IMR-90 (cell line): ENCODE measurements at regions of chrX and their contacts with region 1.

Region 1: GRCh38 chrX:69285881-69286564 is 120.8 kb upstream of the PJA1 start:
- DNase-seq: no peak
- ATAC-seq: peak; percentile 80
- H3K4me3 ChIP-seq: peak overlapping the region; percentile 23; the same call in 1 of the 2 replicates
- H3K27ac ChIP-seq: no peak overlapping the region
- H3K4me1 ChIP-seq: peaks cover 3% of the 10 kb centered on the region; the same call in 1 of the 2 replicates
- H3K27me3 ChIP-seq: peaks cover 41% of the 10 kb centered on the region
- CTCF ChIP-seq: peak; percentile 73
- POLR2A ChIP-seq: no peak
- RAD21 ChIP-seq: peak; percentile 79

Region 2: DNA sequence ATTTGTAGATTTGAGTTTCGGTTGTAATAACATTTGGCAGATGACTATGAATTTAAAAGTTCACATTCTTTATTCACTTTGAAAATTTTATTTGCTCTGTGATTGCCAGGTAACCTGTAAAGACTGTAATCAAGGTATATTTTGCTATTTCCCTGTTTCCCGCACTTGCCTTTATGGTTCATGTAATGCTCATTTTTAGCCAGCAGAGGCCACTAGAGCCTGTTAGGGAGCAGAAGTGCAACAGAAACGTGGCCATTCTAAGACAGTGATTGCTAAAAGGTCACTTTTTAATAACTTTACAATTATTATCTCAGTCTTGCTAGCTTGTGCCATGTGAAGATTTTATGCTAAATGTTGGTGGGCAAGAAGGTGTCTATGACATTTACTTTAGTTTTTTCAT is 774.8 kb before region 1 on chrX:
- CTCF ChIA-PET with region 1: no interaction called
- POLR2A ChIA-PET with region 1: no interaction called
- dilution Hi-C with region 1: no loop called
- in situ Hi-C with region 1: no loop called
- intact Hi-C with region 1: loop called (anchors 10 kb)
- DNase-seq: peak; percentile 48
- ATAC-seq: peak; percentile 86
- H3K4me3 ChIP-seq: no peak overlapping the region
- H3K27ac ChIP-seq: no peak overlapping the region
- H3K4me1 ChIP-seq: no peaks in the 10 kb centered on the region
- H3K27me3 ChIP-seq: no peaks in the 10 kb centered on the region
- CTCF ChIP-seq: peak; percentile 77
- POLR2A ChIP-seq: no peak
- RAD21 ChIP-seq: peak; percentile 74

Region 3: DNA sequence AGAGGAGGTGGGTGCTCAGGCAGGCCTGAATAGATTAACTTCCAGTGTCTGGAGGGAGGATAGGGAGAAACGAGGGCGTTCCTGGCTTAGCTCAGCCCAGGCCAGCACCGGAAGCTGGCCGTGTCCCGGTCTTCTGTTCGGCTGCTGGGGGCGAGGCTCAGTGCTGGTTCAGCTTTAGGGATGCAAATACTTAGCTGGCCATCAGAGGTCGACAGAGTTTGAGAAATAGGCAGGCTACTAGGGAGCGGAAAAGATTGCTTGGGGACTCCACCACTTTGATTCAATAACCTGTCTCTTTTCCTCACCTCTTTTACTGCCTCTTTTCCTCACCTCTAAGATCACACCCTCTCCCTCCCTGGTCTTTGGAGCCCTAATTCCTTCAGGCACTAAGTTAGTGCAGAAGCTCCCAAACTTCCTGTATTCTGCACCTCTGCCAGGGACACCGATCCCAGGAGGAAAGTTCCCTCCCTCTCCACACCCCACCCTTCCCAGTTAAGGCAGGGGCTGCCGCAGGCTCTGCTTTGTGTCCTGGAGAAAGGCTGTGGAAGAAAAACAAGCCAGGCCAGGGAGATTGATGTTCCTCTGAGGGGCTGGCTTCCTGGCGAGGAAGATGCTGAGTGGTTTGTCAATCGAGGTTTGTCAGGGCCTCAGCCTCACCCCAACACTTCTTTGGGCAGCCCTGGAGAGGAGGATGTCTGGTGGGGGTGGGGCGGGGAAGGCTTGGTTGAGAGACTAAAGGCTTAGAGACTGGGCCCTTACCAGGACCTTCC is 463.2 kb before region 1 on chrX:
- CTCF ChIA-PET with region 1: interaction called, 3 read pairs
- POLR2A ChIA-PET with region 1: no interaction called
- dilution Hi-C with region 1: no loop called
- in situ Hi-C with region 1: loop called (anchors 5 kb)
- intact Hi-C with region 1: loop called (anchors 1 kb)
- DNase-seq: peak; percentile 47
- ATAC-seq: peak; percentile 92
- H3K4me3 ChIP-seq: no peak overlapping the region
- H3K27ac ChIP-seq: no peak overlapping the region
- H3K4me1 ChIP-seq: no peaks in the 10 kb centered on the region
- H3K27me3 ChIP-seq: peaks cover 35% of the 10 kb centered on the region
- CTCF ChIP-seq: peak; percentile 74
- POLR2A ChIP-seq: no peak
- RAD21 ChIP-seq: peak; percentile 81

Region 4: DNA sequence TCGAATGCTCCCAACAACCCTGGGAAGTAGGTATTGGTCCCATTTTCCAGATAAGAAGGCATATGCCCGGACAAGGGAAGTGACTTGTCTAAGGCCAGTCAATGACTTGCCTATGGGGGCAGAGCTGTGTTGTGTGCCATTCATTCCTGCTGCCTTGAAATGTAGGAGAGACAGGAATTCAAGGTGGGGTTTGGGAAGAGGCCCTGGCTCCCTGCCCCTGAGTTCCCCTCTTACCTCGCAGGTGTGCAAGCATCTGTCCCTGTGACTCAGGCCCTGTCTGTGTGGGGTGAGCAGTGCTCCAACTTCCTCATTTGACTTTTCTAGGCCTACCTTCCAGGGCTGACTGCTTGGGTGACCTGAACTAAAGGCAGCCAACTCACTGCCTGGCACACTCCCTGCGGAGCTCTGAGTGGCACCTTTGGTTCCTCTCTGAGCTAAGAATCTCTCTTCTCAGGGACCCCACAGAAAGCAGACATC is 452.1 kb before region 1 on chrX:
- CTCF ChIA-PET with region 1: no interaction called
- POLR2A ChIA-PET with region 1: no interaction called
- dilution Hi-C with region 1: no loop called
- in situ Hi-C with region 1: no loop called
- intact Hi-C with region 1: no loop called
- DNase-seq: no peak
- ATAC-seq: no peak
- H3K4me3 ChIP-seq: no peak overlapping the region
- H3K27ac ChIP-seq: no peak overlapping the region
- H3K4me1 ChIP-seq: peaks cover 3% of the 10 kb centered on the region; the same call in 1 of the 2 replicates
- H3K27me3 ChIP-seq: no peaks in the 10 kb centered on the region; the same call in 1 of the 2 replicates
- CTCF ChIP-seq: no peak
- POLR2A ChIP-seq: no peak
- RAD21 ChIP-seq: no peak

Region 5: GRCh38 chrX:69158166-69158980 is 127.7 kb before region 1 on chrX:
- CTCF ChIA-PET with region 1: no interaction called
- POLR2A ChIA-PET with region 1: no interaction called
- dilution Hi-C with region 1: no loop called
- in situ Hi-C with region 1: no loop called
- intact Hi-C with region 1: no loop called
- DNase-seq: peak; percentile 85
- ATAC-seq: peak; percentile 83
- H3K4me3 ChIP-seq: no peak overlapping the region
- H3K27ac ChIP-seq: no peak overlapping the region
- H3K4me1 ChIP-seq: no peaks in the 10 kb centered on the region
- H3K27me3 ChIP-seq: peaks cover 6% of the 10 kb centered on the region
- CTCF ChIP-seq: peak; percentile 51
- POLR2A ChIP-seq: no peak
- RAD21 ChIP-seq: peak; percentile 40

Region 6: DNA sequence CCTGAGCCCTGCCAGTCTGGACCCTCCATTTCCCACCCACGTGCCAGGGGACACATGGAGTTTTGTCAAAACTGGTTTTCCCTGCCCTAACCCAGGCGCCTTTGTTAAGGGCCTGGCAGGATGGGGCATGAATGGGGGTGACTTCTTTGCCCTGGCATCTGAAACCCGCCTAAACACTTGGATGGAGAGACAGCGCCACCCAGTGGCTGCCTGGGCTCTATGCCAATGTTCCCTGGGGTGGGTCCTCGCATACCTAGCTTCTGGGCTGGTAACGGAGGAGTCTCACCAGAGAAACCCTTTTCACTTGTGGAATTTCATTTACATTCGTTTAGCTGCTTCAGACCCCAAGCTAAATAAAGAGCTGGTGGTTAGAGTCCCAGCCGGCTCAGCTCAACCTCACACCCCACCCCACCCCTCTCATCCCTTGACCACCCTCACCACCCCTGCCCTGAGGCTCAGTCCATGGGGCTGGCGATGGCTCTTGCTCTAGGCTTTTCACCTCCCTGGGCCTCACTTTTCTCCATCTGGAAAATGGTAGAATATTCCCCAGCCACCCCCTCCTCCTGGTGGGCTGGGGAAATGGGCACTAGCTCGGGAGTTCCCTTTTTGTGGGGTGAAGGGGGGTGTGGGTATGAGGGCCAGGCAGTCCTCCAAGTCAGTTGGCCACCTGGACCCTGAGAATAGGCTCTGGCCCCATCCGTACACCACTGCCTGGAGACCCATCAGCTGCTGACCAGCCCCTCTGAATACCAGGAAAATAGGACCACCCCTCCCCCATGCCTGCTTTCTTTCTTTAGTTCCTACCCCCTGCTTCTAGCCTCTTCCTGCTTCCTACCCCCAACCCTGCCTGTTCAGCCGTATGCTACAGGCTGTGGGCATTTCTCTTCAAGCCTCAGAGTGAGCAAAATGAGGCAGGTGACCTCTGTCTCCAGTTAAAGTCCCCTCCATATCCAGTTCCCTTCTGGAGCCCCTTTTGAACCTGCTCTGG is 63.6 kb before region 1 on chrX:
- CTCF ChIA-PET with region 1: no interaction called
- POLR2A ChIA-PET with region 1: no interaction called
- dilution Hi-C with region 1: no loop called
- in situ Hi-C with region 1: no loop called
- intact Hi-C with region 1: loop called (anchors 2 kb)
- DNase-seq: peak; percentile 53
- ATAC-seq: peak; percentile 79
- H3K4me3 ChIP-seq: no peak overlapping the region
- H3K27ac ChIP-seq: no peak overlapping the region
- H3K4me1 ChIP-seq: peaks cover 2% of the 10 kb centered on the region; the same call in 1 of the 2 replicates
- H3K27me3 ChIP-seq: peaks cover 27% of the 10 kb centered on the region
- CTCF ChIP-seq: peak; percentile 79
- POLR2A ChIP-seq: no peak
- RAD21 ChIP-seq: peak; percentile 86